ENCODE measurements at regions of chr1 and their contacts with region 1.

Region 1: GRCh38 chr1:44714944-44715571 is 15.9 kb downstream of the RNU5D-1 start:
- DNase-seq: peak; percentile 73
- ATAC-seq: peak; percentile 95
- H3K4me3 ChIP-seq: no peak overlapping the region
- H3K27ac ChIP-seq: no peak overlapping the region
- H3K4me1 ChIP-seq: peaks cover 5% of the 10 kb centered on the region
- H3K27me3 ChIP-seq: peaks cover 2% of the 10 kb centered on the region; the same call in 1 of the 2 replicates
- CTCF ChIP-seq: peak; percentile 84
- POLR2A ChIP-seq: no peak
- RAD21 ChIP-seq: peak; percentile 76

Region 2: GRCh38 chr1:44460107-44460882 is 254.8 kb before region 1 on chr1:
- CTCF ChIA-PET with region 1: no interaction called
- POLR2A ChIA-PET with region 1: interaction called, 12 read pairs
- dilution Hi-C with region 1: no loop called
- in situ Hi-C with region 1: no loop called
- intact Hi-C with region 1: no loop called
- DNase-seq: no peak
- ATAC-seq: no peak
- H3K4me3 ChIP-seq: no peak overlapping the region
- H3K27ac ChIP-seq: no peak overlapping the region
- H3K4me1 ChIP-seq: no peaks in the 10 kb centered on the region
- H3K27me3 ChIP-seq: peaks cover 30% of the 10 kb centered on the region
- CTCF ChIP-seq: no peak
- POLR2A ChIP-seq: no peak
- RAD21 ChIP-seq: no peak

Region 3: DNA sequence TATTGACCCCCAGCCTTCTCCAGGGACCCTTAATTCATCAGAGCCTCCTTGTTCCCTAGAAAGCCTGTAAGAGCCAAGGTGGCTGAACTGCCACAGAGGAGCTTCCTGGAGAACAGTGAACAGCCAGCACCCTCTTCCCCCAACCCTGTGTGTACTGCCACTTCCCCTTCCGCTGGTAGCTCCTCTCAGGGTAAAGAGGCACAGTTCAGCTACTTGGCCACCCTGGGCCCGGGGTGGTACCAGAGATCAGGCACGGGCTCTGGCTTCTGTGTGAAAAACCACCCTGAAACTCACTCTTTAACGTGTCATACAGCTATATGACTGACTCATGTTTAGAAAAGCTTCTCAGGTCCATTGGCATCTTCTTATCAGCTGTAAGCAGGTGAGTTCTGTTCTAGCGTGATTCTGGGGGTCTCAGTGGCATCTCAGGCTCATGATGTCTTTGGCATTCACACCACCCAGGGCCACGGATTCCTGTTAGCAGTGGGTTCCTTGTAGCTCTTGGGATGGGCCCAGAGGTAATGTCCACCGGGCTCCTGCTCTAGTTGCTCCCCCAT is 18.2 kb before region 1 on chr1:
- CTCF ChIA-PET with region 1: interaction called, 11 read pairs
- POLR2A ChIA-PET with region 1: no interaction called
- dilution Hi-C with region 1: no loop called
- in situ Hi-C with region 1: no loop called
- intact Hi-C with region 1: no loop called
- DNase-seq: no peak
- ATAC-seq: no peak
- H3K4me3 ChIP-seq: no peak overlapping the region
- H3K27ac ChIP-seq: no peak overlapping the region
- H3K4me1 ChIP-seq: peaks cover 2% of the 10 kb centered on the region; the same call in 1 of the 2 replicates
- H3K27me3 ChIP-seq: peaks cover 14% of the 10 kb centered on the region
- CTCF ChIP-seq: no peak
- POLR2A ChIP-seq: no peak
- RAD21 ChIP-seq: no peak